KBM-7 (cell line): ENCODE measurements at regions of chrX and their contacts with region 1.

Region 1: DNA sequence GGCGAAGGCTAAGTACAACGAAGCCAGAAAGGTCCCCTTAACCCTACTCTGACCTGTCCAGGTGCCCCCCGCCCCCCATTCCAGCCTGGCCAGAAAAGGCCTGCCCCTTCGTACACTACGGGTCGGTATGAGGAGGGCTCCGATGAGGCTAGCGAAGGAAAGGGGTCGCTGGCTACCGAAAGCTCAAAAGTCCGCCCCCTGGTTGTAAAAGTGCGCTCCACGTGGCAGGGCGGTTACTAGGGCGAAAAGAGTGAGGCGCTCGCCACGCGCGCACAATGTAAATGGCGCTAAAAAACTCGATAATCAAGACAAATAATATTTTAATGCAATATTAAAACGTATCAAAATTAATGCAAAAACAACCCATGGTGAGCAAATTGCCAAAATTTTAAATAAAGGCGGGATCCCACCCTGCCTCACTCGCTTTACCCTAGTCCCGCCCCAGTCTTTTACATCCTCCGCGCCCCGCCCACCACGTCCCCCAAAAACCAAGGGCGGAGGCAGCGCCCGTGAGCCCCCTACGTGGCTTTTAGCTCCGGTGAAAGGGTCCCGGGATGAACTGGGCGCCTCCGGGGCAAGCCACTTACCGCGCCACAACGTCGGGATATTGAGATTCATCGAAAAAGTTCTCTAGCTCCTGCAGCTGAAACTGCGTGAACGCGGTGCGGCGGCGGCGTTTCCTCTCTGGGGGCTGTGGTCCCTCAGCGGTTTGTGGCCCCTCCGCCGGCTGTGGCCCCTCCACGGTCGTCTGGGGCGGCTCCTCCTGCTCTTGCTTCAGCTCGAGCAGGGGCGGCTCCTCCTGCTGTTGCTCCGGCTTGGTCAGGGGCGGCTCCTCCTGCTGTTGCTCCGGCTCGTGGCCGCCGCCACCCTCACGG is 929 bp downstream of the ESX1 start:
- DNase-seq: no peak

Region 2: GRCh38 chrX:104141087-104141760 is 112.6 kb before region 1 on chrX:
- in situ Hi-C with region 1: no loop called
- DNase-seq: no peak

Region 3: GRCh38 chrX:104343428-104344129 is 89.8 kb after region 1 on chrX:
- in situ Hi-C with region 1: loop called (anchors 25 kb)
- DNase-seq: peak; percentile 83